CD4-positive, alpha-beta memory T cell (primary cell): ENCODE measurements at regions of chr2 and their contacts with region 1.

Region 1: GRCh38 chr2:25851740-25852503 is 26.4 kb downstream of the ASXL2 start:
- DNase-seq: peak; percentile 66 to 79 (median 72)
- H3K4me3 ChIP-seq: peak overlapping the region in 1 of 2 donors; percentile 13
- H3K4me3 Mint-ChIP-seq: peak overlapping the region; percentile 59 to 87 (median 80)
- H3K27ac ChIP-seq: peak overlapping the region; percentile 52
- H3K27ac Mint-ChIP-seq: peak overlapping the region; percentile 63 to 97 (median 84)
- H3K4me1 ChIP-seq: peaks cover 48% of the 10 kb centered on the region
- H3K4me1 Mint-ChIP-seq: peaks cover 37 to 50% (median 43%) of the 10 kb centered on the region in 4 donors
- H3K27me3 ChIP-seq: no peaks in the 10 kb centered on the region
- H3K27me3 Mint-ChIP-seq: no peaks in the 10 kb centered on the region

Region 2: GRCh38 chr2:25794544-25795276 is 57.2 kb before region 1 on chr2:
- CTCF ChIA-PET with region 1: interaction called, 37 read pairs
- POLR2A ChIA-PET with region 1: interaction called, 5 read pairs
- intact Hi-C with region 1: loop called (anchors 1 kb)
- DNase-seq: peak; percentile 54 to 66 (median 55)
- H3K4me3 ChIP-seq: peak overlapping the region in 1 of 2 donors; percentile 48
- H3K4me3 Mint-ChIP-seq: peak overlapping the region; percentile 81 to 94 (median 90)
- H3K27ac ChIP-seq: peak overlapping the region; percentile 68
- H3K27ac Mint-ChIP-seq: peak overlapping the region; percentile 92 to 98 (median 94)
- H3K4me1 ChIP-seq: peaks cover 95% of the 10 kb centered on the region
- H3K4me1 Mint-ChIP-seq: peaks cover 63 to 91% (median 76%) of the 10 kb centered on the region in 4 donors
- H3K27me3 ChIP-seq: no peaks in the 10 kb centered on the region
- H3K27me3 Mint-ChIP-seq: no peaks in the 10 kb centered on the region

Region 3: GRCh38 chr2:25835906-25836305 is 16.0 kb before region 1 on chr2:
- CTCF ChIA-PET with region 1: interaction called, 43 read pairs
- POLR2A ChIA-PET with region 1: no interaction called
- intact Hi-C with region 1: no loop called
- DNase-seq: no peak
- H3K4me3 ChIP-seq: no peak overlapping the region
- H3K4me3 Mint-ChIP-seq: no peak overlapping the region
- H3K27ac ChIP-seq: no peak overlapping the region
- H3K27ac Mint-ChIP-seq: peak overlapping the region in 2 of 7 donors; percentile 4 to 57
- H3K4me1 ChIP-seq: peaks cover 15% of the 10 kb centered on the region
- H3K4me1 Mint-ChIP-seq: peaks cover 17 to 39% (median 34%) of the 10 kb centered on the region in 4 donors
- H3K27me3 ChIP-seq: no peaks in the 10 kb centered on the region
- H3K27me3 Mint-ChIP-seq: no peaks in the 10 kb centered on the region

Region 4: GRCh38 chr2:25878361-25879132 is 26.6 kb after region 1 on chr2 and contains the start of gene ASXL2:
- CTCF ChIA-PET with region 1: interaction called, 46 read pairs
- POLR2A ChIA-PET with region 1: interaction called, 31 read pairs
- intact Hi-C with region 1: loop called (anchors 1 kb)
- DNase-seq: peak; percentile 97 to 98 (median 97)
- H3K4me3 ChIP-seq: peak within 1 kb of the TSS; percentile 81 to 98
- H3K4me3 Mint-ChIP-seq: peak within 1 kb of the TSS; percentile 94 to 99 (median 97)
- H3K27ac ChIP-seq: peak within 1 kb of the TSS; percentile 98
- H3K27ac Mint-ChIP-seq: peak within 1 kb of the TSS; percentile 94 to 99 (median 99)
- H3K4me1 ChIP-seq: peaks cover 39% of the 10 kb centered on the region
- H3K4me1 Mint-ChIP-seq: peaks cover 27 to 47% (median 35%) of the 10 kb centered on the region in 4 donors
- H3K27me3 ChIP-seq: no peaks in the 10 kb centered on the region
- H3K27me3 Mint-ChIP-seq: no peaks in the 10 kb centered on the region
- total RNA-seq, gene ASXL2: 56.0 to 63.6 TPM

Region 5: DNA sequence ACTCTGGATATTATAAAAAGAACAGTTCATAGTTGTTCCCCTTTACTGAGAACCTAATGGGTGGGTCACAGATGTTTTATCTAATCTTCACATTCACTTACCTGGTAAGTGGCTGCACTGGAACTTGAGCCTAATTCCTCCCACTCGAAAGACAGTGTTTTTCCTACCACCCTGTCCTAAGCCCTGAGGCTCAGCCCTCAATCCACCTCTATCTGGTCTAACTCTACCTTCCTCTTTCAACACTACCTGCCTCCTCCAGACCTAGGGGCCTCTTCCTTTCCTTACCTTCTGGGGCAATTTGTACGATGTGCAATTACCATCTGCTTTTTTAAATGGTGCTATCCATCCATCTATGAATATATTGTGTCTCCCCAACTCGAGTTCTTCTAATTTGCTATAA is 140.0 kb after region 1 on chr2:
- CTCF ChIA-PET with region 1: interaction called, 5 read pairs
- POLR2A ChIA-PET with region 1: interaction called, 3 read pairs
- intact Hi-C with region 1: loop called (anchors 2 kb)
- DNase-seq: no peak
- H3K4me3 ChIP-seq: no peak overlapping the region
- H3K4me3 Mint-ChIP-seq: peak overlapping the region in 4 of 8 donors; percentile 27 to 86 (median 68)
- H3K27ac ChIP-seq: no peak overlapping the region
- H3K27ac Mint-ChIP-seq: peak overlapping the region in 4 of 7 donors; percentile 11 to 78 (median 47)
- H3K4me1 ChIP-seq: peaks cover 9% of the 10 kb centered on the region
- H3K4me1 Mint-ChIP-seq: peaks cover 6 to 14% (median 10%) of the 10 kb centered on the region in 4 donors
- H3K27me3 ChIP-seq: no peaks in the 10 kb centered on the region
- H3K27me3 Mint-ChIP-seq: no peaks in the 10 kb centered on the region